ENCODE measurements at regions of chr6 and their contacts with region 1.

Region 1: GRCh38 chr6:160455541-160456213 is 107.5 kb downstream of the SLC22A3 start:
- DNase-seq: peak; percentile 76
- H3K4me3 Mint-ChIP-seq: no peak overlapping the region
- H3K27ac Mint-ChIP-seq: no peak overlapping the region
- H3K4me1 Mint-ChIP-seq: peaks cover 36% of the 10 kb centered on the region
- H3K27me3 Mint-ChIP-seq: peaks cover 69% of the 10 kb centered on the region

Region 2: GRCh38 chr6:159862103-159862502 is 593.6 kb before region 1 on chr6:
- CTCF ChIA-PET with region 1: interaction called, 15 read pairs
- DNase-seq: no peak
- H3K4me3 Mint-ChIP-seq: no peak overlapping the region
- H3K27ac Mint-ChIP-seq: peak overlapping the region; percentile 20
- H3K4me1 Mint-ChIP-seq: peaks cover 15% of the 10 kb centered on the region
- H3K27me3 Mint-ChIP-seq: no peaks in the 10 kb centered on the region

Region 3: DNA sequence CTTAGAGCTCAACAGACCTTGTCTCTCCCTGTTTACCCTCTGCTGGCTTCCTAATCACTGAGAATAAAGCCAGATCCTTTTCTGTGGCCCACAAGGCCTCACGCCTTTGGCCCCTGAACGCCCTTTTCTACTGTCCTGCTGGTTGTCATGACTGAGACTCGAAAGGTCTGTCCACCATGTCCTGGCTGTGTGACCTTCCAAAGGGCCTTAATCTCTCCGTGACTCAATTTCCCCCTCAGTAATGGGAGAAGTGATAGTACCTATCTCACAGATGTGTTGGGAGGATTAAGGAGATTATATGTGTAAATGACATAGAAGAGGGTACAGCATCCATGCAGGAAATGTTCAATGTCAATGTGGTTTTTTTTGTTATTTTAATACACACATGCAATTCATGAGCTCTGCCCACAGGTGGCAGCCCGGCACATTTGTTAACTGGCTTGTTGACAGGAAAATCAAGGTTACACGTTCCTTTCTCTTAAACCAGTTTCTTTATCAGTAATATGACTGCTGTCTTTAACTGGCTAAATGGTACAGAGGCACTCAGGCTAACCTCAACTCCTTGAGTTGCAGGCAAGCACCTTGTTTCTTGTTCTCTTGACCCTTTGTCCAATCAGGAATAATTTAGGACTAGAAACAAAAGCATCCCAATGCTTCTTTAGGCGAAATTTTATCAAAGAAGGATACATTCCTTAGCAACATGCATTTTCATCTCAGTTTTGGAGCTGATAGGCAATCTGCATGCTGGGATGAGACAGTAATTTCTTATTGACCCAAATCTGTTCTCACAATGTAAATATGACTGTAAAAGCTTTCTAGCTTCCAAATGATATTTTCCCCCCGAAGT is 317.5 kb before region 1 on chr6:
- CTCF ChIA-PET with region 1: interaction called, 33 read pairs
- DNase-seq: peak; percentile 79
- H3K4me3 Mint-ChIP-seq: no peak overlapping the region
- H3K27ac Mint-ChIP-seq: no peak overlapping the region
- H3K4me1 Mint-ChIP-seq: peaks cover 8% of the 10 kb centered on the region
- H3K27me3 Mint-ChIP-seq: peaks cover 16% of the 10 kb centered on the region

Region 4: GRCh38 chr6:160534050-160534696 is 78.5 kb after region 1 on chr6:
- CTCF ChIA-PET with region 1: interaction called, 10 read pairs
- DNase-seq: peak; percentile 67
- H3K4me3 Mint-ChIP-seq: no peak overlapping the region
- H3K27ac Mint-ChIP-seq: no peak overlapping the region
- H3K4me1 Mint-ChIP-seq: no peaks in the 10 kb centered on the region
- H3K27me3 Mint-ChIP-seq: peaks cover 22% of the 10 kb centered on the region